ENCODE measurements at regions of chr4 and their contacts with region 1.

Region 1: DNA sequence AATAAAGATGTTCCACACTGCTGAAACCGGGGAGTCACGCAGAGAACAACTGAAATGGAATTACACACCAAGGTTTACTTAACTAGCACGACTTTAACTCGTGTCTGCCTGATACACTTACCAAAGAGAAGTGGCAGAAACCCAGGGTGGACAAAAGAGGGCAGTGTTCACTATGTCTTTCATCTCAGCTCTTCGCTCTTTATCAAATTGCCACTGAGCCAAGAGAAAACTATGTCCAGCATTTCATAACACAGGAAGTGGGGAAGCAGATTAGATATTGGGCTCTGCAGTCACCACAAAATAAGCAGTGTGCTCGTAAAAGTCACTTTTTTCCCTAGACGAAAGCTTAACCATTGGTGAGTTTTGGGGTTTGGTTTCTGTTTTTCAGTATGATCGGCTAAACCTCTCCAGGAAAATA is 155.7 kb downstream of the CHIC2 start:
- DNase-seq: peak in 2 of 4 donors; percentile 81 to 92
- ATAC-seq: peak; percentile 94
- H3K4me3 ChIP-seq: no peak overlapping the region
- H3K27ac ChIP-seq: no peak overlapping the region
- H3K4me1 ChIP-seq: peaks cover 4 to 27% of the 10 kb centered on the region in 2 donors
- H3K27me3 ChIP-seq: peaks cover 3 to 44% of the 10 kb centered on the region in 2 donors
- CTCF ChIP-seq: peak; percentile 54 to 59

Region 2: DNA sequence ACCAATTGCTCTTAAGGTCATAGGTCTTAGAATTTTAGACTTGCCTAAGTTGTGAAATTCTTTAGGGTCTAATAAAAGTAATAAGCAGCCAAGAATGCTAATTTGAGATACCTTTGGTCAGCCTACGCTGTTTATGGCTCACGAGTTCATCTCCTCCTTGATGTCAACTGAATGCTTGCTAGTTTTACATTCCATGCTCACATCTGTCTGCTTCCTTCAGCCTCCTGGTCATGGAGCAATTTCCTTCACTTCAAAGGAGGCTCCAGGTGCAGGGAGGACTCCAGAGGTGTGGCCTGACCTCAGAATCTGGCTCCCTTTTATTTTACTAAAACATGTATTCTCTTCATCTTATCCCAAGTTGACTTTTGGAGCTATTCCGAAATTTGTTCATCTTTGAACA is 294.1 kb before region 1 on chr4:
- intact Hi-C with region 1: no loop called
- DNase-seq: no peak
- ATAC-seq: no peak
- H3K4me3 ChIP-seq: no peak overlapping the region
- H3K27ac ChIP-seq: no peak overlapping the region
- H3K4me1 ChIP-seq: no peaks in the 10 kb centered on the region
- H3K27me3 ChIP-seq: no peaks in the 10 kb centered on the region
- CTCF ChIP-seq: no peak

Region 3: GRCh38 chr4:54228056-54228527 is 319.4 kb after region 1 on chr4:
- intact Hi-C with region 1: loop called in 1 of 2 experiments (anchors 5 kb)
- DNase-seq: peak; percentile 75 to 89 (median 85)
- ATAC-seq: peak; percentile 67
- H3K4me3 ChIP-seq: peak overlapping the region; percentile 2 to 23
- H3K27ac ChIP-seq: peak overlapping the region; percentile 6 to 72
- H3K4me1 ChIP-seq: peaks cover 0 to 58% of the 10 kb centered on the region in 2 donors
- H3K27me3 ChIP-seq: peaks cover 85 to 100% of the 10 kb centered on the region in 2 donors
- CTCF ChIP-seq: peak; percentile 57 to 61

Measured in left lung (tissue), 14 donors.